Common myeloid progenitor, CD34-positive (primary cell): ENCODE measurements at regions of chr11 and their contacts with region 1.

Region 1: DNA sequence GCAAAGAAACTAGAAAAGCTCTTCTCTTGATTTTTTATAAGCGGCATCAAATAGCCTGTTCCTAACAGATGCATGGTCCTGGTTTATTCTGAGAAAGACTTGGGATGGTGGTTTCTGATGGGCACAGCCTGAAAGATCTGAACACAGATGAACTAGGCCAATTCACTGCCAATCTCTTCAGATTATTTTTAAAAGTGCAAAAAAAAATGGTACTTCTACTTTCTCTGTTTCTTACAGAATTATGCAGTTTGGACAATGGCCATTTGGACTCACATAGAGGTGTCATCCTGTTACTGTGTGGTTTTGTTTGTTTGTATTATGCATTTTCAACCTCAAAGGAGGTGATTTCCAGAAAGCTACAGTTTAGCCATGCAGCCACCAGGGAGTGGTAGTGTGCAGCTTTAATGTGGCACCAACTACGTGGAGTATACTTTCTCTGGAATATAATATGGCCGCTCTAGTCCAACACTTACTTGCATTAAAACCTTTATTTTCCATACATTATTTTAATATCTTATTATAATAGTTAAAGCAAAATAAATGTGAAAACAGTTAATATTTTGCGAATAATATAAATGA is 469.8 kb upstream of the KIRREL3 start:
- DNase-seq: peak; percentile 39 to 65 (median 50)
- H3K4me3 ChIP-seq: no peak overlapping the region
- H3K27ac ChIP-seq: no peak overlapping the region
- H3K4me1 ChIP-seq: peaks cover 0 to 5% (median 2%) of the 10 kb centered on the region in 4 experiments
- H3K27me3 ChIP-seq: peaks cover 0 to 2% (median 0%) of the 10 kb centered on the region in 5 experiments

Region 2: DNA sequence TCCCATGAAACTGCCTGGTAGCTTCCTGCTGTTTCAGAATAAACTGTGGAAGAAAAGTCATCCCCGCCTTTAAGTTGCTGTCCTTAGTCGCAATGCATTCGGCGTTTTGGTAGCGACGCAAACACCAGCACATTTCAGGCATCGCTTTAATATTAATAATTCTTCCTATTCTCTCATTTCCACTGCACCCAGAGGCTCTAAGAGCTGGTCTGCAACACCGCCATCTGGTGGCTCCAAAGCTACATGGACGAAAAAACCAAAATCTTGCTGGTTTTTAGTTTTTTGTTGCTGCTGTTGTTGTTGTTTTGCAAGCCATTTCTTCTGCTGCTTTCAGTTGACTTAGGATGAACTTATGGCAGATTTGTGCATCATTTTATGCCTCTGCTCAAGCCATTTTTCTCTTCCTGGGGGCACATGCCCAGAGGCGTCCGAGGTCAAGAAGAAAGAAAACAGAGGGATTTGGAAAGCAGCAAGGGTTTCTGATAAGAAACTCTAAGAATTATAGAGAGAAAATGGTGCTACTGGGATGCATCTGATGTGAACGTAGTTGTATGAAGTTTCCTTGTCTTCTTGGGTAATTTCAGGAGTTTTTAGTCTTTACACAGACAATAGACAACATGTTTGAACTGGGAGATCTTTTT is 124.5 kb before region 1 on chr11:
- CTCF ChIA-PET with region 1: no interaction called
- POLR2A ChIA-PET with region 1: no interaction called
- DNase-seq: peak; percentile 20 to 57 (median 42)
- H3K4me3 ChIP-seq: no peak overlapping the region
- H3K27ac ChIP-seq: no peak overlapping the region
- H3K4me1 ChIP-seq: no peaks in the 10 kb centered on the region
- H3K27me3 ChIP-seq: peaks cover 0 to 6% (median 2%) of the 10 kb centered on the region in 5 experiments

Region 3: GRCh38 chr11:127362754-127363153 is 107.6 kb before region 1 on chr11:
- CTCF ChIA-PET with region 1: no interaction called
- POLR2A ChIA-PET with region 1: no interaction called
- DNase-seq: no peak
- H3K4me3 ChIP-seq: no peak overlapping the region
- H3K27ac ChIP-seq: no peak overlapping the region
- H3K4me1 ChIP-seq: no peaks in the 10 kb centered on the region
- H3K27me3 ChIP-seq: no peaks in the 10 kb centered on the region

Region 4: DNA sequence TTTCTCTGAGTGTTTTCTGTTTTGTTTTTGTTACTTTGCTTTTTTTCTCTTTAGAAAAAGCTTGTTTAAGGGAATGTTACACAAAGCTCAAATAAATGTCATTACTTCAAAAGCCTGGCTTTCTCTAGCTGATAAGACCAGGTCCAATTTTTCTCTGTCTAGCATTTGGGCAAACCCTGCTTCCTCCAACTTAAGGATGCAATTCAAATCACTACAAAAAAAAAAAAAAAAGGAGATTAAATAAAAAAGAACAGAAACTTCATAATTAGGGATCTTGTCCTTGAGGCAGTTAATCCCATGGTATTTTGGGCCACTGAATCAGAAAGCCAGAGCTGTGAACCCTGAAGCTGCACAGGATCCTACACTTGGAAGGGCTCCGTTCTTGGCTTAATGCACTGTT is 11.0 kb after region 1 on chr11:
- CTCF ChIA-PET with region 1: interaction called, 21 read pairs
- POLR2A ChIA-PET with region 1: no interaction called
- DNase-seq: no peak
- H3K4me3 ChIP-seq: no peak overlapping the region
- H3K27ac ChIP-seq: no peak overlapping the region
- H3K4me1 ChIP-seq: no peaks in the 10 kb centered on the region
- H3K27me3 ChIP-seq: peaks cover 0 to 21% (median 0%) of the 10 kb centered on the region in 5 experiments

Region 5: GRCh38 chr11:128021349-128022006 is 551.1 kb after region 1 on chr11:
- CTCF ChIA-PET with region 1: interaction called, 18 read pairs
- POLR2A ChIA-PET with region 1: no interaction called
- DNase-seq: peak; percentile 24 to 32 (median 30)
- H3K4me3 ChIP-seq: no peak overlapping the region
- H3K27ac ChIP-seq: no peak overlapping the region
- H3K4me1 ChIP-seq: no peaks in the 10 kb centered on the region
- H3K27me3 ChIP-seq: peaks cover 0 to 3% (median 0%) of the 10 kb centered on the region in 5 experiments